Heart left ventricle (tissue), 16 donors: ENCODE measurements at regions of chr4 and their contacts with region 1.

Region 1: DNA sequence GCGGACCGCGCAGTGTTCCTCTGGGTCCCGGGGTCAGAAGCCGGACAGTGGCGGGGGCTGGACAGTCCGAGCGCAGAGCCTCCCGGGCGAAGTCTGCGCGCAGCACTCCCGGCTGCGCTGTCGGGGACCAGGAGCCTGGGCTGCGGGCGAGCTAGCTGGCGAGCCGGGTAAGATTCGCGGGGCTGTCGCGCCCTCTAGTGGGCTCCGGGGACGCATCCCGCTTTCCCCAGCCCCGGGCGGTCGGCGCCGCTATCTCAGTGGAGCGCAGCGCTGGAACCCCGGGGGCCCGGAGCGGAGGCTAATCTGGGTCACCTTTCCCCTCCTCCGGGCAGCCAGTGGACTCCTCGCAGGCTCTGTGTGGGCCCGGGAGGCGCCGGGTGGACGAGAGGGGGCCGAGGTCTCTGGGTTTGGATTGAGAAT is 4.2 kb downstream of the PDGFRA start:
- DNase-seq: peak; percentile 85 to 92 (median 89)
- ATAC-seq: peak; percentile 64 to 88 (median 85)
- H3K4me3 ChIP-seq: peak overlapping the region; percentile 22 to 80 (median 58)
- H3K27ac ChIP-seq: peak overlapping the region in 11 of 12 donors; percentile 19 to 89 (median 68)
- H3K4me1 ChIP-seq: peaks cover 6 to 51% (median 40%) of the 10 kb centered on the region in 12 donors
- H3K27me3 ChIP-seq: peaks cover 26 to 51% (median 43%) of the 10 kb centered on the region in 9 donors
- CTCF ChIP-seq: peak; percentile 67 to 89 (median 80)
- POLR2A ChIP-seq: no peak

Region 2: DNA sequence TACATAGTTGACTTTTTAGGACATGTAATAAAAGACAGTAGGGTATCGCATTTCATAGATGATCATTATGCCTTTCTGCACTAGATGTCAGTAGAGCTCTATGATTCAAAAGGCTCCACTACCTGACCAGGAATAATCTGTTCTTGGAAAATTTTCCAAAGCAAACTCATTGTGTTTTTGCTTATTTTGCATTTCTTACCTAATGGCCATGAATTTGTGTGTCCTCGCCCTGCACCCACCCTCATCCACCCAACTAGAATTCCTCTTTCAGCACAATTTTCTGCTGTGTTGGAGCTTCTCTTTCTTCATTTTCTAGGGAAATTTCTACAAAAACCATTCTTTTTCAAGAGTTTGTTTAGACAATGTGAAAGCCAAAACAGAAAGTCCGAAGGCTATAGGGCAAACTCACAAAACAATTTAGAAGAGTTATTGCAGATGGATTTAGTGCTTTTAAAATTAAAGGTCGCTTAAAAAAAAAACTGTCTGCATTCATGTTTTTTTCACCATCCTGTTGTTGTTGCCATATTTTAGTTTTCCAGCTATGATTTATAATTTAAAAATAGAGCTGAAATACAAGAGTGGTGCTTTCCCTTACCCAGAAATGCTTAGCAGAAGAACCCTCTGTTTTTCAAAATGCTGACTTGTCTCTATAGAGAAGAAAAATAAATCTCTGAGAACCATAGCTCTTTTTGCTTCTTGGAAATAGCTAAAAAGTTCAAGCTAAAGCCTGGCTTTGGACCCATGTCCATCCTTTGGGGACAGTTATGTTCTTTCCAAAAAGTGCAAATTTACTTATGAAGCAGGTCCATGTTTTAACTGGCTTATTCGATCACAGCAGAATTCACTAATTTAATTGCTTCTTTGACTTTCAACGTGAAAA is 1998.5 kb before region 1 on chr4:
- intact Hi-C with region 1: loop called in 7 of 10 experiments (anchors 5 to 10 kb)
- DNase-seq: no peak
- ATAC-seq: peak; percentile 73 to 86 (median 78)
- H3K4me3 ChIP-seq: peak overlapping the region in 2 of 12 donors; percentile 2 to 6
- H3K27ac ChIP-seq: no peak overlapping the region
- H3K4me1 ChIP-seq: peaks cover 0 to 5% (median 0%) of the 10 kb centered on the region in 12 donors
- H3K27me3 ChIP-seq: peaks cover 0 to 3% (median 0%) of the 10 kb centered on the region in 9 donors
- CTCF ChIP-seq: peak in 11 of 12 donors; percentile 37 to 77 (median 64)
- POLR2A ChIP-seq: no peak

Region 3: DNA sequence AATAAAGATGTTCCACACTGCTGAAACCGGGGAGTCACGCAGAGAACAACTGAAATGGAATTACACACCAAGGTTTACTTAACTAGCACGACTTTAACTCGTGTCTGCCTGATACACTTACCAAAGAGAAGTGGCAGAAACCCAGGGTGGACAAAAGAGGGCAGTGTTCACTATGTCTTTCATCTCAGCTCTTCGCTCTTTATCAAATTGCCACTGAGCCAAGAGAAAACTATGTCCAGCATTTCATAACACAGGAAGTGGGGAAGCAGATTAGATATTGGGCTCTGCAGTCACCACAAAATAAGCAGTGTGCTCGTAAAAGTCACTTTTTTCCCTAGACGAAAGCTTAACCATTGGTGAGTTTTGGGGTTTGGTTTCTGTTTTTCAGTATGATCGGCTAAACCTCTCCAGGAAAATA is 324.6 kb before region 1 on chr4:
- intact Hi-C with region 1: loop called in 6 of 10 experiments (anchors 2 to 10 kb)
- DNase-seq: peak in 3 of 5 donors; percentile 37 to 50 (median 44)
- ATAC-seq: peak; percentile 84 to 94 (median 93)
- H3K4me3 ChIP-seq: peak overlapping the region in 8 of 12 donors; percentile 12 to 42 (median 27)
- H3K27ac ChIP-seq: peak overlapping the region in 8 of 12 donors; percentile 27 to 63 (median 40)
- H3K4me1 ChIP-seq: peaks cover 0 to 37% (median 14%) of the 10 kb centered on the region in 12 donors
- H3K27me3 ChIP-seq: peaks cover 0 to 32% (median 11%) of the 10 kb centered on the region in 9 donors
- CTCF ChIP-seq: peak; percentile 40 to 83 (median 67)
- POLR2A ChIP-seq: no peak

Region 4: DNA sequence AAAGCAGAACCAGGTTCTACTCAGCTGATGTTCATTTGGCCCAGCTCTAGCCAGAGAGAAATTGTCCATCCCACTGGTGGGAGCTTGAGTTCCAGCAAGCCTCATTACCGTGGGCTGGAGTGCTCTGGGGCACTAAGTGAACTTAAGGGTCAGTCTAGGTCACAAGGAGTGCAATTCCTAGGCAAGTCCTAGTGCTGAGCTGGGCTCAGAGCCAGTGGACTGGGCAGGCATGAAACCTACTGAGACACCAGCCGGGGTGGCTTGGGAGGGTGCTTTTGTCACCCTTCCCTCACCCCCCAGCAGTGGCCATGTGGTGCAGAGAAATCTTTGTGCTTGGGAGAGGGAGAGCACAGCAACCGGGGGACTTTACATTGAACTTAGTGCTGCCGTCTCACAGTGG is 94.0 kb before region 1 on chr4:
- intact Hi-C with region 1: no loop called
- DNase-seq: peak in 2 of 5 donors; percentile 36 to 47
- ATAC-seq: peak in 3 of 4 donors; percentile 39 to 51 (median 45)
- H3K4me3 ChIP-seq: no peak overlapping the region
- H3K27ac ChIP-seq: no peak overlapping the region
- H3K4me1 ChIP-seq: peaks cover 0 to 5% (median 0%) of the 10 kb centered on the region in 12 donors
- H3K27me3 ChIP-seq: no peaks in the 10 kb centered on the region
- CTCF ChIP-seq: no peak
- POLR2A ChIP-seq: no peak

Region 5: GRCh38 chr4:55896622-55897021 is 1663.3 kb after region 1 on chr4:
- intact Hi-C with region 1: no loop called
- DNase-seq: no peak
- ATAC-seq: no peak
- H3K4me3 ChIP-seq: no peak overlapping the region
- H3K27ac ChIP-seq: no peak overlapping the region
- H3K4me1 ChIP-seq: no peaks in the 10 kb centered on the region
- H3K27me3 ChIP-seq: no peaks in the 10 kb centered on the region
- CTCF ChIP-seq: no peak
- POLR2A ChIP-seq: no peak